Activated CD4-positive, alpha-beta memory T cell treated with anti-CD3 and anti-CD28 coated beads for 36 hours (primary cell): ENCODE measurements at regions of chr6 and their contacts with region 1.

Region 1: GRCh38 chr6:129672881-129673643 is 36.9 kb downstream of the ARHGAP18 start:
- DNase-seq: no peak
- H3K4me3 Mint-ChIP-seq: peak overlapping the region; percentile 67
- H3K27ac Mint-ChIP-seq: peak overlapping the region; percentile 95
- H3K4me1 Mint-ChIP-seq: peaks cover 36% of the 10 kb centered on the region
- H3K27me3 Mint-ChIP-seq: no peaks in the 10 kb centered on the region

Region 2: DNA sequence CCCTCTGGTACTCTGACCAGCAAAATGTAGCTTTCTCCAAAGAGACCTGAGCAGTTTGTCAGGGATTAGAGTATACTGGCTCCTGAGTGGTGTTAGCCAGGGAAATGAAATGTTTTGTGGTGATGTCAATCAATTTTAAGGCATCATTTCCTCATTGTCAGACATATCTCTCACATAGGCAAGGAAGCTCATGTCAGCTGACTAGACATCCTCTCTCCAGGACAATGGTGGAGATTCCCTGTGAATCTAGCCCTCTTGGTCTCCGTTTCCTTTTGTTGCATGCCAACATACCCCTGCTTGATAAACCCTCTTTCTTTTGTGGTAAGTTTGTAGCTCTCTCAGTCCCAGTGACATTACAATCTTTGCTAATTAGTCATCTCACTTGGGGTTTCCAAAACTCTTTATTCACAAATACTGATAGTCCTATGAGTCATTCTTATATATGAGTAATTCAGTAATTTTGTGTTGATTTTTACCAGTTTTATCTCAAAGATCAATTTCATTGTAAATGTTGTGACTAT is 1017.0 kb before region 1 on chr6:
- CTCF ChIA-PET with region 1: no interaction called
- POLR2A ChIA-PET with region 1: no interaction called
- intact Hi-C with region 1: loop called (anchors 10 kb)
- DNase-seq: peak; percentile 16
- H3K4me3 Mint-ChIP-seq: no peak overlapping the region
- H3K27ac Mint-ChIP-seq: peak overlapping the region; percentile 74
- H3K4me1 Mint-ChIP-seq: peaks cover 31% of the 10 kb centered on the region
- H3K27me3 Mint-ChIP-seq: peaks cover 10% of the 10 kb centered on the region

Region 3: GRCh38 chr6:129621247-129621646 is 51.8 kb before region 1 on chr6:
- CTCF ChIA-PET with region 1: interaction called, 3 read pairs
- POLR2A ChIA-PET with region 1: no interaction called
- intact Hi-C with region 1: loop called (anchors 5 kb)
- DNase-seq: peak; percentile 57
- H3K4me3 Mint-ChIP-seq: no peak overlapping the region
- H3K27ac Mint-ChIP-seq: no peak overlapping the region
- H3K4me1 Mint-ChIP-seq: no peaks in the 10 kb centered on the region
- H3K27me3 Mint-ChIP-seq: no peaks in the 10 kb centered on the region

Region 4: GRCh38 chr6:129695373-129696027 is 22.4 kb after region 1 on chr6:
- CTCF ChIA-PET with region 1: interaction called, 3 read pairs
- POLR2A ChIA-PET with region 1: interaction called, 3 read pairs
- intact Hi-C with region 1: loop called (anchors 1 kb)
- DNase-seq: peak; percentile 64
- H3K4me3 Mint-ChIP-seq: no peak overlapping the region
- H3K27ac Mint-ChIP-seq: no peak overlapping the region
- H3K4me1 Mint-ChIP-seq: peaks cover 29% of the 10 kb centered on the region
- H3K27me3 Mint-ChIP-seq: no peaks in the 10 kb centered on the region

Region 5: GRCh38 chr6:129730477-129731165 is 57.6 kb after region 1 on chr6:
- CTCF ChIA-PET with region 1: interaction called, 10 read pairs
- POLR2A ChIA-PET with region 1: no interaction called
- intact Hi-C with region 1: loop called (anchors 1 kb)
- DNase-seq: peak; percentile 19
- H3K4me3 Mint-ChIP-seq: no peak overlapping the region
- H3K27ac Mint-ChIP-seq: no peak overlapping the region
- H3K4me1 Mint-ChIP-seq: peaks cover 11% of the 10 kb centered on the region
- H3K27me3 Mint-ChIP-seq: no peaks in the 10 kb centered on the region

Region 6: DNA sequence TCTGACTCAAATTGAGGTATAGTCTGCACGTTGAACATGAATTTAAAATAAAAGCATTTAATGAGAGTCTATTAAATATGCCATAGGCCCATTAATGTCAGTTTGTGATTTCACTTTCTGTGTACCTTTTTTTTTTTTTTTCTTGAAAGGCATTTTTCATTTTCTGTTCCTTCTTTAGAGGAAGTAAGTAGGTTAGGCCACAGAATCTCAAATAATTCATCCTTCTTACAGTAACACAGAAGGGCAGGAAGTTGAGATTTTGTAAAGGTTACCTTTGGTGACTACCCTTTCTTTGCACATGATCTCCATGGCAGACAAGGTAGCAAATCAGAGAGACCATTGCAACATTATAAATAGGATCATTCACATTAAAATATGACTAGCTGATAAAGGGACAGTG is 354.9 kb after region 1 on chr6:
- CTCF ChIA-PET with region 1: no interaction called
- POLR2A ChIA-PET with region 1: no interaction called
- intact Hi-C with region 1: loop called (anchors 2 kb)
- DNase-seq: no peak
- H3K4me3 Mint-ChIP-seq: no peak overlapping the region
- H3K27ac Mint-ChIP-seq: peak overlapping the region; percentile 70
- H3K4me1 Mint-ChIP-seq: peaks cover 53% of the 10 kb centered on the region
- H3K27me3 Mint-ChIP-seq: no peaks in the 10 kb centered on the region